Panc1 (cell line): ENCODE measurements at regions of chr1 and their contacts with region 1.

Region 1: GRCh38 chr1:16162163-16162822 is 6.4 kb upstream of the EPHA2 start:
- DNase-seq: no peak
- ATAC-seq: peak; percentile 65
- H3K4me3 ChIP-seq: peak overlapping the region; percentile 8 to 45
- H3K27ac ChIP-seq: peak overlapping the region; percentile 62
- H3K4me1 ChIP-seq: peaks cover 70% of the 10 kb centered on the region
- H3K27me3 ChIP-seq: no peaks in the 10 kb centered on the region
- CTCF ChIP-seq: no peak

Region 2: DNA sequence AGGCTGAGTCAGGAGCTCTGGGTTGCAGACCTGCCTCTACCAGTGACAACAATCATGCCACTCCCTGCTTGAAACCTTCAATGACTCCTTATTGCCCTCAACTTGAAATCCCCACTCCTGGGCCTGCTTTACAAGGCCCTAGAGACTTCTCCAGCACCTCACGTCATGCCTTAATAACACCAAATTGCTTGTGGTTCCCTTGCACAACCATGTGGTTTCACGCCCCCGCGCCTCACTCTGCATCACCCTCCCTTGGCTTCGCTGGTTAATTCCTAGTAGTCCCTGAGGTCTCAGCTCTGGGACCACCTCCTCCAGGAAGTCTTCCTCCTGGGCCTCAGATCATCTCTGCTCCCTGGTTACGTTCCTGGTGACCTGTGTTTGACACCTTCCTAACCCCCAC is 39.4 kb before region 1 on chr1:
- CTCF ChIA-PET with region 1: no interaction called
- POLR2A ChIA-PET with region 1: no interaction called
- in situ Hi-C with region 1: no loop called
- intact Hi-C with region 1: no loop called
- DNase-seq: no peak
- ATAC-seq: peak; percentile 4
- H3K4me3 ChIP-seq: no peak overlapping the region
- H3K27ac ChIP-seq: peak overlapping the region; percentile 83
- H3K4me1 ChIP-seq: peaks cover 83% of the 10 kb centered on the region
- H3K27me3 ChIP-seq: no peaks in the 10 kb centered on the region
- CTCF ChIP-seq: no peak

Region 3: GRCh38 chr1:16235944-16236510 is 73.7 kb after region 1 on chr1:
- CTCF ChIA-PET with region 1: interaction called, 12 read pairs
- POLR2A ChIA-PET with region 1: interaction called, 4 read pairs
- in situ Hi-C with region 1: no loop called
- intact Hi-C with region 1: no loop called
- DNase-seq: no peak
- ATAC-seq: peak; percentile 79
- H3K4me3 ChIP-seq: peak overlapping the region; percentile 66 to 96
- H3K27ac ChIP-seq: peak overlapping the region; percentile 96
- H3K4me1 ChIP-seq: peaks cover 13% of the 10 kb centered on the region
- H3K27me3 ChIP-seq: no peaks in the 10 kb centered on the region
- CTCF ChIP-seq: no peak

Region 4: DNA sequence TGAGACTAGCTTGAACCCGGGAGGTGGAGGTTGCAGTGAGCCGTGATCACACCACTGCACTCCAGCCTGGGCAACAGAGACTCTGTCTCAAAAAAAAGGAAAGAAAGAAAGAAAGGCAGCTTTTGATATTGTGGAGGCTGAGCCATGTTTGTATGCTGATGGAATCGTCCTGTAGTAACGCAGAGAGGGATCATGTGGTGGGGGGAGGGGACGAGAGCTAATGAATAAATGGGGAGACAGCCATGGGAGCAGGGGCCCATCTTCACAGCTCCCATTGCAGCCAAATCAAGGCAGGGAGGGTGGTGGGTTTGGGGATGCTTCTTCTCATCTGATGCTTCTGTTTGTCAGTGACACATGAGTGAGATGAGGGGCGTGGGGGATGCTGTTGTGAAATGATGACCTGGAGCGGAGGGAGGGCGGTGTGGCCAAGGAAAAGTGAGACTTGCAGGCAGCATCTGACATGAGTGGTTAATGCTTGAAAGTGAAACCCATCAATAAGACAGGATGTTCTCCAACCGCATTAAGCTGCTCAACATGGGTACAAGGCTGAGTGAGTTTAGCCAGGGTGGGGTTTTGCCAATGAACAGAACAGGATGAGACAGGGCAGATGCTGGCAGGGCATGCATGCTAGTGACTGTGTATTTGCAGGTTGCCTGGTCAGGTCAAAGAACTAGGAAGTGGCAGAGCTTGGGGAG is 258.3 kb after region 1 on chr1:
- CTCF ChIA-PET with region 1: no interaction called
- POLR2A ChIA-PET with region 1: no interaction called
- in situ Hi-C with region 1: no loop called
- intact Hi-C with region 1: no loop called
- DNase-seq: no peak
- ATAC-seq: no peak
- H3K4me3 ChIP-seq: no peak overlapping the region
- H3K27ac ChIP-seq: no peak overlapping the region
- H3K4me1 ChIP-seq: no peaks in the 10 kb centered on the region; the same call in 1 of the 2 replicates
- H3K27me3 ChIP-seq: no peaks in the 10 kb centered on the region
- CTCF ChIP-seq: no peak